GM10248 (cell line): ENCODE measurements at regions of chr2 and their contacts with region 1.

Region 1: DNA sequence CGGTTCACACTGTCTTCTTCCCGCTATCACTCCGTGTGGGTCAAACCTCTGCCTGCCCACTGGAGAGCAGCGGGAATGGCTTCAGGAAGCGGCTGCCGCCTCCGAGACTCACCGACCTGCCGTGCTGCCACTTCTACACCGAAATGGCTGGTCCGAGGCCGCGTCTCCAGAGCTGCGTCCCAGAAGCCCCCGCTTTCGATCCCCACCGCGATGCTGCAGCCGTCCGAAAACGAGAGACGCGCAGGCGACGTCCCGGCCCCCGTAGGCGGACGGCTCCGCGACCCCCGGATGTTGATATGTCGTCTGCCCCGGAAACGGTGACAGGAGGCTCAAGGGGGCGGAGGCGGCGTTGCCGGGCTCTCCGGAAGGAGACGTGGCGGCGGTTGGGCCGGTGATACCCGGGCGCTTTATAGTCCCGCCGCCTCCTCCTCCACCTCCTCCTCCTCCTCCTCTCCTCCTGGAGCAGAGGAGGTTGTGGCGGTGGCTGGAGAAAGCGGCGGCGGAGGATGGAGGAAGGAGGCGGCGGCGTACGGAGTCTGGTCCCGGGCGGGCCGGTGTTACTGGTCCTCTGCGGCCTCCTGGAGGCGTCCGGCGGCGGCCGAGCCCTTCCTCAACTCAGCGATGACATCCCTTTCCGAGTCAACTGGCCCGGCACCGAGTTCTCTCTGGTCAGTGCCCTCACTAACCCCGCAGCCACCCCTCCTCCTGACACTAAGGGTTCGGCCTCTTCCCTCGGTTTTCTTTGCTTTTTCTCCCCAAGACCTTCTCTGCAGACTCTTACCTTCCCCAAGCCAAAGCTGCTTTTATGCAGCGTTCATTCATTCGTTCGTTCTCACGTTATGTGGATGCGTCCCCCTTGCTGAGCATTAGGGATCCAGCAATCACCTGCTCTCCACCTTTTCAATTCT is at the starts of genes ASB3 and ERLEC1:
- DNase-seq: peak; percentile 94
- CTCF ChIP-seq: peak; percentile 12

Region 2: GRCh38 chr2:53403792-53404413 is 383.1 kb before region 1 on chr2:
- CTCF ChIA-PET with region 1: no interaction called
- POLR2A ChIA-PET with region 1: no interaction called
- DNase-seq: no peak
- CTCF ChIP-seq: no peak

Region 3: DNA sequence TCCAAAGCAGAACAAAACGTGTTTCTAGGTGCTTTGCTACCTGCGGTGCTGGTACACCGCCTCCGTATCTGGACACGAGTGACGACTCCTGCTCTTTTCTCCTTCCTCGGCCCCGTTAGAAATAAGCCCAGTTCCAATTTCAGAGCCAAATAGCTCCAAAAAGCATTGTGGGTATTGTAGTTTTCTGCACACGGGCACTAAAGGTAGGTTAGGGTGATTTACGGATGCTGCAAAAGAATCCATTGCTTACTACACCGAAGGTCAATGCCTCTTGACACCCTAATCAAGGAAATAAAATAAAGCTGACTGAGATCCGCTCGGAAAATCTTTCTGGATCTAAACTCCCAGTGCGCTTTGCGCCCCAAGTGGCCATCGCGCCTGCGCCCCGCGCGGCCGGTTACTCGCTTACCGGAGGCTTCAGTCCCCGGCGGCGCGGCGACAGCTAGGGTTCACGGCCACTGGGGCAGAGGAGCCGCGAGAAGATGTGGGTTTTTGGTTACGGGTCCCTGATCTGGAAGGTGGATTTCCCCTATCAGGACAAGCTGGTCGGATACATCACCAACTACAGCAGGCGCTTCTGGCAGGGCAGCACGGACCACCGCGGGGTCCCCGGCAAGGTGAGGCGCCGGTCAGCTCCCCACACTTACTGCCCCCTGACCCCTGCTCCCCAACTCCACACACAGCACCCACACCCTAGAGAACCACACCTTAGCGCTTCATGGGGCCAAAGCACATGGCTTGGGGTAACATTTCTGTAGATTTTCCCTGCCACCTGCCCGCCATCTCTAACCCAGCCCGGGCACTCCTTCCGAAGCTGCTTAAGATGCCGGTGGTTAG is 19.3 kb before region 1 on chr2 and contains the start of gene CHAC2:
- CTCF ChIA-PET with region 1: interaction called, 44 read pairs
- POLR2A ChIA-PET with region 1: interaction called, 9 read pairs
- DNase-seq: peak; percentile 90
- CTCF ChIP-seq: no peak